Activated CD8-positive, alpha-beta T cell treated with anti-CD3 and anti-CD28 coated beads for 36 hours (primary cell): ENCODE measurements at regions of chr17 and their contacts with region 1.

Region 1: GRCh38 chr17:43125133-43125966 is at the start of gene BRCA1:
- DNase-seq: peak; percentile 99
- ATAC-seq: peak; percentile 99
- H3K4me3 Mint-ChIP-seq: peak within 1 kb of the TSS; percentile 87
- H3K27ac Mint-ChIP-seq: peak within 1 kb of the TSS; percentile 98
- H3K4me1 Mint-ChIP-seq: peaks cover 16% of the 10 kb centered on the region
- H3K27me3 Mint-ChIP-seq: no peaks in the 10 kb centered on the region
- CTCF ChIP-seq: no peak
- total RNA-seq, gene BRCA1: 84.5 to 92.9 TPM

Region 2: GRCh38 chr17:43151880-43152456 is 26.6 kb after region 1 on chr17:
- CTCF ChIA-PET with region 1: no interaction called
- POLR2A ChIA-PET with region 1: no interaction called
- intact Hi-C with region 1: no loop called
- DNase-seq: no peak
- ATAC-seq: no peak
- H3K4me3 Mint-ChIP-seq: no peak overlapping the region
- H3K27ac Mint-ChIP-seq: no peak overlapping the region
- H3K4me1 Mint-ChIP-seq: no peaks in the 10 kb centered on the region
- H3K27me3 Mint-ChIP-seq: no peaks in the 10 kb centered on the region
- CTCF ChIP-seq: no peak

Region 3: GRCh38 chr17:43170766-43171585 is 45.6 kb after region 1 on chr17 and contains the start of gene NBR1:
- CTCF ChIA-PET with region 1: interaction called, 4 read pairs
- POLR2A ChIA-PET with region 1: interaction called, 13 read pairs
- intact Hi-C with region 1: loop called (anchors 2 kb)
- DNase-seq: peak; percentile 99
- ATAC-seq: peak; percentile 85
- H3K4me3 Mint-ChIP-seq: no peak within 1 kb of the TSS
- H3K27ac Mint-ChIP-seq: no peak within 1 kb of the TSS
- H3K4me1 Mint-ChIP-seq: peaks cover 33% of the 10 kb centered on the region
- H3K27me3 Mint-ChIP-seq: no peaks in the 10 kb centered on the region
- CTCF ChIP-seq: no peak
- total RNA-seq, gene NBR1: 45.6 to 46.5 TPM